Psoas muscle (tissue), 8 donors: ENCODE measurements at regions of chrX and their contacts with region 1.

Region 1: GRCh38 chrX:47540754-47541538 is 20.1 kb upstream of the ARAF start:
- DNase-seq: peak; percentile 55 to 78
- ATAC-seq: peak; percentile 96 to 99 (median 98)
- H3K4me3 ChIP-seq: no peak overlapping the region
- H3K27ac ChIP-seq: peak overlapping the region; percentile 72
- H3K4me1 ChIP-seq: peaks cover 6% of the 10 kb centered on the region
- H3K27me3 ChIP-seq: no peaks in the 10 kb centered on the region
- CTCF ChIP-seq: peak; percentile 47

Region 2: DNA sequence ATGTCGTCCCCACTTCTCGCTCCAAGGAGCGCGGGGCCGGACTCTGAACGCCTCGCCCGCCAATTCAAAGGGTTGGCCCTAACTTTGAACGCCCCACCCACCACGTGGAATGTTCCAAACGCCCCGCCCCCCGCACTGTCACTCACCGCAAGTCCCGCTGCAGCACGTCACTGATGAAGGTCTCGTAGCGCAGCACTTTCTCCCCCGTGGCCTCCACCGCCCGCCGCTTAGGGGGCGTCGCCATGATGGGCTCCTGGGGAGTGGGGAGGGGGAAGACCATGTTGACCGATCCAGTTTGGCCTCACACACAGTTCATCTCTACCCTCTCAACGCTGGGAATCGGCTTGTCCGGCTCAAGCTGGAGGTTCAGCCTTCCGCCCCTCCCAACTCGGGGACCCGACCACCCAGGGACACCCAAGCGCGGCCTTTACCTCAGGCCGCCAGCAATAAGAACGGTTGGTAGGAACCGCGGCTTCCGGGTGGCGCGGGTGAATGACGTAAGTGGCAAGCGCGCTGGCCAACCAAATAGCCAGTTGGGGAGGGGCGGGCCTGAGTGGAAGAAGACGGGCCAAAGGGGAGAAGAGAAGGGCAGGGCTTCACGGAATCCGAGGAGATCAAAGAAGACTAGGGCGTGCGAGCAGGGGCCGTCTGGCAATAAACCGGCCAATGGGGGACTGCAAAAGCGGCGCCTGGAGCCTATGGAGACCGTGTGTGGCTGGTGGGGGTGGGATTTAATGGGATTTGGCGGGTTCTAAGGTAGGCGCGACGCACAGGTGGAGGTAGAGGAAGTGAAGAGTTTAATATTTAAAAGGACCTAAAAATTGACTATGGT is 118.0 kb after region 1 on chrX and contains the start of gene UXT:
- intact Hi-C with region 1: loop called in 1 of 2 experiments (anchors 5 kb)
- DNase-seq: peak; percentile 91 to 95
- ATAC-seq: peak; percentile 92 to 95 (median 94)
- H3K4me3 ChIP-seq: peak within 1 kb of the TSS; percentile 80
- H3K27ac ChIP-seq: peak within 1 kb of the TSS; percentile 94
- H3K4me1 ChIP-seq: no peaks in the 10 kb centered on the region
- H3K27me3 ChIP-seq: no peaks in the 10 kb centered on the region
- CTCF ChIP-seq: no peak
- total RNA-seq, gene UXT: 67.8 to 87.1 (median 80.4) TPM